PC-3 (cell line): ENCODE measurements at regions of chr20 and their contacts with region 1.

Region 1: GRCh38 chr20:235891-236290 is 8.8 kb downstream of the DEFB129 start:
- DNase-seq: peak; percentile 51
- ATAC-seq: peak; percentile 80
- H3K4me3 ChIP-seq: no peak overlapping the region
- H3K27ac ChIP-seq: no peak overlapping the region
- H3K4me1 ChIP-seq: no peaks in the 10 kb centered on the region
- H3K27me3 ChIP-seq: peaks cover 17% of the 10 kb centered on the region
- CTCF ChIP-seq: peak; percentile 47; the same call in 1 of the 2 replicates

Region 2: DNA sequence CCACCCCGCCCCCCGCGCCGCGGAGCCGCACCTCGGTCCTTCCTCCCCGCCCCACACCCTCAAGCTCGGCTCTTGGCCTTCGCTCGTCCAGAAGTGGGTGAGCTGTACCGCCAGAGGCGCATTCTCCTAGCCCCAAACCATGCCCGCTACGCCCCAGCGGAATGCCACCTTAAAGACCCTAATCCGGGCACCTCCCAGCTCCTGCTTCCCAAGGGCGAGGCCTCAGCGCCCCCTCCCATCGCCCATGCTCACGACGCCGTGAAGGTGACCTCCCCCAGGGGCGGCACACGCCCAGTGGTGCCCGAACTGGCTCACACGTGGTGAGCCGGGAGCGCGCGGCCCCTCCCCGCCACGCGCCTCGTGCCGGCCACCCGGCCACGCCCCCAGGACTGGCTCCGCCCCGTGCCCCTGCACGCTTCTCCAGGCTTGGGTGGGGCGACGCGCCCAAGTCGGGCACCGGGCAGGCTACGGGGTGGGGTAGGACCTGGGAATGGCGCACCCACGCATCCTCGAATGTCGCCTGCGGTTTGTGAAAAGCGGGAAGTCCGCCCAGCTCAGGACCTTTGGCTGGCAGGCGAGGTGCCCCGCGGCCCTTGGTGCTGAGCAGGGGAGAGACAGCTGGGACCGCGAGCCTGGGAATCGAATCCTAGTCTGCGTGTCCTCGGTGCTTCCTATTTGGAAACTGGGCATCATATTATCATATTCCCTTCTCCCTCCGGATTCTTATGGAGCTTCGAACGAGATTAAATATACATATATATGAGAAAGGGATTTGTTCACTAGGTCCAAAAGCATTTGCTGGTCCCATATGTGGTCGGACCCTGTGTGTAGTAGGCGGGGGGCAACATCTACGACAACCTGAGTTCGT is 88.5 kb after region 1 on chr20:
- CTCF ChIA-PET with region 1: interaction called, 5 read pairs
- POLR2A ChIA-PET with region 1: no interaction called
- intact Hi-C with region 1: loop called (anchors 5 kb)
- DNase-seq: peak; percentile 97
- ATAC-seq: peak; percentile 55
- H3K4me3 ChIP-seq: peak overlapping the region; percentile 69
- H3K27ac ChIP-seq: peak overlapping the region; percentile 71
- H3K4me1 ChIP-seq: peaks cover 29% of the 10 kb centered on the region
- H3K27me3 ChIP-seq: no peaks in the 10 kb centered on the region
- CTCF ChIP-seq: 0 out of 2 replicates have a peak, but pooled peaks have one; percentile 21